ENCODE measurements at regions of chr3 and their contacts with region 1.

Region 1: GRCh38 chr3:20039766-20040475 is at the start of gene KAT2B:
- DNase-seq: peak; percentile 75
- H3K4me3 Mint-ChIP-seq: peak within 1 kb of the TSS; percentile 99
- H3K27ac Mint-ChIP-seq: peak within 1 kb of the TSS; percentile 98
- H3K4me1 Mint-ChIP-seq: peaks cover 61% of the 10 kb centered on the region
- H3K27me3 Mint-ChIP-seq: no peaks in the 10 kb centered on the region
- total RNA-seq, gene KAT2B: 25.1 and 38.5 TPM in 2 replicates

Region 2: DNA sequence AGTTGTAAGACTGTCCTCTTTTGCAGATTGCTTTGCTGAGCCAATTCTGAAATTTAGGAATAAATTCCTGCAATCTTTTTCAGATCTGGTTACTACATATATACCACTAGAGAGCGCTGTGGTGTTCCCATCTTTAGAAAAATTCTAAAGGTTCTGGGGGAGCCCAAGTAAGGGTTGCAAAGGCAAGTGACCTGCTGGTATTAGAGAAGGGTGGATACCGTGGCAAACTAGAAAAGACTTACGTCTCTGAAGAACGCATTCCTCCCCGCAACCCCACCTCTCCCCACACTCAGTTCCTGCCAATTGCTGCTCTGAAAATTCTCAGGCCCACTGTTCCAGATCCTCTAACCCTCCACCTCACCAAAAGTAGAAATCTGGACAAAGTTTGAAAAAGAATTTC is 154.5 kb before region 1 on chr3:
- intact Hi-C with region 1: loop called (anchors 1 kb)
- DNase-seq: no peak
- H3K4me3 Mint-ChIP-seq: no peak overlapping the region
- H3K27ac Mint-ChIP-seq: no peak overlapping the region
- H3K4me1 Mint-ChIP-seq: peaks cover 11% of the 10 kb centered on the region
- H3K27me3 Mint-ChIP-seq: peaks cover 5% of the 10 kb centered on the region

Region 3: GRCh38 chr3:19946832-19947548 is 92.9 kb before region 1 on chr3 and contains the start of gene RAB5A:
- intact Hi-C with region 1: loop called (anchors 1 kb)
- DNase-seq: peak; percentile 96
- H3K4me3 Mint-ChIP-seq: peak within 1 kb of the TSS; percentile 92
- H3K27ac Mint-ChIP-seq: peak within 1 kb of the TSS; percentile 97
- H3K4me1 Mint-ChIP-seq: peaks cover 47% of the 10 kb centered on the region
- H3K27me3 Mint-ChIP-seq: no peaks in the 10 kb centered on the region
- total RNA-seq, gene RAB5A: 62.2 and 64.0 TPM in 2 replicates

Region 4: DNA sequence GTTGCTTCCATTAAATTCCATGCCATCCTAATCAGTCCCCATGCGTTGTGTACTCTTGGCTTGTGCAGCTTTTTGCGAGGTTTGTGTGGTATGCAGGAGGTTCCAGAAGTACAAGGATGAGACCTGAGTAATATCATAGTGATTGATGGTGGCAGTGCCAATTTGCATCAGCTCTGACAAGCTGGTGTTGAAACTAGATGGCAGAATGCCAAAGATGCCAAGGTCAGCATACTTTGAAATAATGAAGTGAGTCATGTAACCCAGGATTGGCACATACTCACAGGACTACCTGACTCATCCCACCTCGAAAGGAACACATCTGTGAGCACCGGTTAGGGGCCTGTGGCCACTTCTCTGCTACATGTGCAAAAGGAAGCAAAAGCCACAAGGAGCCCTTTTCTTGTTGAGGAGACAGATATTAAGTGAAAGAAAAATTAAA is 14.6 kb after region 1 on chr3:
- intact Hi-C with region 1: loop called (anchors 1 kb)
- DNase-seq: peak; percentile 54
- H3K4me3 Mint-ChIP-seq: no peak overlapping the region
- H3K27ac Mint-ChIP-seq: no peak overlapping the region
- H3K4me1 Mint-ChIP-seq: peaks cover 37% of the 10 kb centered on the region
- H3K27me3 Mint-ChIP-seq: no peaks in the 10 kb centered on the region

Region 5: GRCh38 chr3:20060974-20061685 is 21.2 kb after region 1 on chr3:
- intact Hi-C with region 1: loop called (anchors 1 kb)
- DNase-seq: no peak
- H3K4me3 Mint-ChIP-seq: no peak overlapping the region
- H3K27ac Mint-ChIP-seq: peak overlapping the region; percentile 73
- H3K4me1 Mint-ChIP-seq: peaks cover 40% of the 10 kb centered on the region
- H3K27me3 Mint-ChIP-seq: no peaks in the 10 kb centered on the region

Region 6: DNA sequence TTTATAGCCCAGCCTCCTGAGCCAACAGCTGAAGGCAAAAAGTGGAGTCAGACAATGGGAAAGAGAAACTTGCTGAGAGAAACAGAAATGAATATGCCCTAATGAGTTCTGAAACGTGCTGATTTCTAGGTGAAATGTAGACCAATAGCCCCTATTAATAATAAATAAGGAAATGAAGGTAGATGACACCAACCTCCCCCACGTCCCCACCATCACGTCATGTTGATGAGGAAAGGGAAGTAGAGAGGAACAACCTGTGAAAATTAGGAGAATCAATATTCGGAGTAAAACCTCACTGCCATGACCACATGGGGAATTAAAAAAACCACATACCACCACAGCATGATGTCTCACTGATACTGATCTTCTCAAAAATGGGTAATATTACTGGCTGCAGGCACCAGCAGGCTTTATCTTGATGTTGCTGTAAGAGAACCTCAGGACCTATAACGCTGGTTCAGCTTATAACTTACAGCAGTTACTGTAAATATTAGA is 64.3 kb after region 1 on chr3:
- intact Hi-C with region 1: loop called (anchors 1 kb)
- DNase-seq: peak; percentile 52
- H3K4me3 Mint-ChIP-seq: peak overlapping the region; percentile 52
- H3K27ac Mint-ChIP-seq: peak overlapping the region; percentile 93
- H3K4me1 Mint-ChIP-seq: peaks cover 79% of the 10 kb centered on the region
- H3K27me3 Mint-ChIP-seq: no peaks in the 10 kb centered on the region

Region 7: GRCh38 chr3:20185701-20186598 is 146.0 kb after region 1 on chr3 and contains the start of gene SGO1:
- intact Hi-C with region 1: loop called (anchors 1 kb)
- DNase-seq: peak; percentile 100
- H3K4me3 Mint-ChIP-seq: no peak within 1 kb of the TSS
- H3K27ac Mint-ChIP-seq: no peak within 1 kb of the TSS
- H3K4me1 Mint-ChIP-seq: no peaks in the 10 kb centered on the region
- H3K27me3 Mint-ChIP-seq: no peaks in the 10 kb centered on the region
- total RNA-seq, gene SGO1: 17.8 and 18.3 TPM in 2 replicates

Region 8: GRCh38 chr3:21330293-21330692 is 1290.4 kb after region 1 on chr3:
- intact Hi-C with region 1: no loop called
- DNase-seq: no peak
- H3K4me3 Mint-ChIP-seq: no peak overlapping the region
- H3K27ac Mint-ChIP-seq: no peak overlapping the region
- H3K4me1 Mint-ChIP-seq: no peaks in the 10 kb centered on the region
- H3K27me3 Mint-ChIP-seq: no peaks in the 10 kb centered on the region